ENCODE measurements at regions of chr14 and their contacts with region 1.

Region 1: GRCh38 chr14:89040460-89041259 is 216.2 kb downstream of the TTC8 start:
- DNase-seq: peak; percentile 79 to 93 (median 88)
- H3K4me3 ChIP-seq: peak overlapping the region; percentile 33 to 80 (median 62)
- H3K27ac ChIP-seq: peak overlapping the region in 56 of 59 donors; percentile 1 to 91 (median 76)
- H3K27me3 ChIP-seq: no peaks in the 10 kb centered on the region
- CTCF ChIP-seq: peak; percentile 78 to 97 (median 93)

Region 2: GRCh38 chr14:88590173-88590572 is 450.5 kb before region 1 on chr14:
- intact Hi-C with region 1: no loop called
- DNase-seq: peak in 1 of 10 donors; percentile 12
- H3K4me3 ChIP-seq: no peak overlapping the region
- H3K27ac ChIP-seq: peak overlapping the region in 4 of 59 donors; percentile 3 to 34 (median 20)
- H3K27me3 ChIP-seq: no peaks in the 10 kb centered on the region
- CTCF ChIP-seq: no peak

Region 3: DNA sequence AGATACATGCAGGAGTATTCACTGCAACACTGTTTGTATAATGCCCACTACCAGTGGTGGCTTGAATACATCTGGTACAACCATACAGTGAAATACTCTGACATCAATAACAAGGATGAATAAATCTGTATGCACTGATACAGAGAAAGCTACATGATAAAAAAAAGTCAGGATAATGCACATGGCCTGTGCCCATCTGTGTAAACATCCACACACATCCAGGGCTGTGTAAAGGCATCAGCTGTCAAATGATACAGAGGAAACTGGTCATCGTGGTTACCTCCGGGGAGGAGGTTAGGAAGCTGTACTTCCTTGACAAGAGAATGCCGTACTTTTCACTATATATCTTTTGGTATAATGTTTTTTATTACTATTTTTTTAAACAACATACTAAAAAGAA is 199.8 kb after region 1 on chr14:
- intact Hi-C with region 1: loop called in 1 of 2 experiments (anchors 5 kb)
- DNase-seq: no peak
- H3K4me3 ChIP-seq: no peak overlapping the region
- H3K27ac ChIP-seq: no peak overlapping the region
- H3K27me3 ChIP-seq: no peaks in the 10 kb centered on the region
- CTCF ChIP-seq: no peak

Region 4: DNA sequence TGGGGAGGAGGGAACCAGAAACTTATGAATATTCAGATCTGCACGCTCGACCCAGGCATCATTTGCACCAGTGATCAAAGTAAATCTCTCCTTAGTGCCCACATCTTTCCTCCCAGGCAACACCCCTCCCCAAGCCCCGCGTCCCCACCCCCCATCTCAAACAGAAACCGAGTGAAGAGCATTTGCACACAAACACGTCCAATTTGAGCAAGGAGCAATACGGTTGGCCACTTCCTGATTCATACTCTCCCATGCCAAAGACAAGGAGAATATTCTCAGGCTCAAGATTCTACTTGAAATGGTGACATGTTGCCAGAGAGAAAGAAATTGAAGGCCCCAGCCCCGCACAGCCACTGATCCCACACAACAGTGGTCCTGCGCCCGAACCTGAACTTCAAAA is 369.3 kb after region 1 on chr14:
- intact Hi-C with region 1: loop called (anchors 5 kb)
- DNase-seq: no peak
- H3K4me3 ChIP-seq: peak overlapping the region in 18 of 59 donors; percentile 1 to 39 (median 12)
- H3K27ac ChIP-seq: peak overlapping the region in 19 of 59 donors; percentile 8 to 66 (median 28)
- H3K27me3 ChIP-seq: no peaks in the 10 kb centered on the region
- CTCF ChIP-seq: no peak

Region 5: GRCh38 chr14:89773644-89774316 is 733.1 kb after region 1 on chr14:
- intact Hi-C with region 1: loop called in 1 of 2 experiments (anchors 10 kb)
- DNase-seq: no peak
- H3K4me3 ChIP-seq: no peak overlapping the region
- H3K27ac ChIP-seq: no peak overlapping the region
- H3K27me3 ChIP-seq: no peaks in the 10 kb centered on the region
- CTCF ChIP-seq: no peak